ENCODE measurements at regions of chr5 and their contacts with region 1.

Region 1: DNA sequence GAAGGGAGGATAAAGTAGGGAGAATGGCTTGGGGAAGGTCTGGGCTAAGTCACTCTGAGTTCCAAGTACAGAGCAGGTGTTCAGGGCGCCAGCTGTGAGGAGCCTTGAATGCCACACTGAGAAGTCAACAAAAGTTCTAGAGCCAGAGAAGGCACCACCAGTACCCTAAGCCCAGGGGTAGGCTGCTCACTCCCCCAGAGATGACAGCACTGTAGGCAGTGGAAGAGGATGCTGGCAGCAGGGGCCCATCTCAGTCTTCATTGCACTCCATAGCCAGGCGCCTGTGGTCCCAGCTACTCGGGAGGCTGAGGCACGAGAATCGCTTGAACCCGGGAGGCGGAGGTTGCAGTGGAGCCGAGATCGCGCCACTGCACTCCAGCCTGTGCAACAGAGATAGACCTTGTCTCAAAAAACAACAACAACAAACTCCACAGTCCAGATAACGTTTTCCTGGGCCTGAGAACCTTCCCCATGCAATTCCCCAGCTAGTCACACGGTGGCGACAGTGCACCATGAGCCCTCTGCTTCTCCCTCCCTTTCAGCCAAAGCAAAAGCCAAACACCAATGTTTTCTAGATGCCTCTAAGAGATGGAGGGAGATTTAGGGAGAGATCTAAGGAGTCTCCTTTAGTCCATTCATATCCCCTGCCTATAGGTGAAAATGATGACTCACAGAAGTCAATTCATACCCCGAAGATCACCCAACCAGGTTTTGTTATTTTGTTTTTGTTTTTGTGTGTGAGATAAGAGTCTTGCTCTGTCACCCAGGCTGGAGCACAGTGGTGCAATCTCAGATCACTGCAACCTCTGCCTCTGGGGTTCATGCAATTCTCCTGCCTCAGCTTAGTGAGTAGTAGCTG is 19.8 kb upstream of the NSD1 start:
- ATAC-seq: peak; percentile 41 to 70 (median 60)
- H3K4me3 ChIP-seq: no peak overlapping the region
- H3K27ac ChIP-seq: no peak overlapping the region
- H3K4me1 ChIP-seq: no peaks in the 10 kb centered on the region

Region 2: DNA sequence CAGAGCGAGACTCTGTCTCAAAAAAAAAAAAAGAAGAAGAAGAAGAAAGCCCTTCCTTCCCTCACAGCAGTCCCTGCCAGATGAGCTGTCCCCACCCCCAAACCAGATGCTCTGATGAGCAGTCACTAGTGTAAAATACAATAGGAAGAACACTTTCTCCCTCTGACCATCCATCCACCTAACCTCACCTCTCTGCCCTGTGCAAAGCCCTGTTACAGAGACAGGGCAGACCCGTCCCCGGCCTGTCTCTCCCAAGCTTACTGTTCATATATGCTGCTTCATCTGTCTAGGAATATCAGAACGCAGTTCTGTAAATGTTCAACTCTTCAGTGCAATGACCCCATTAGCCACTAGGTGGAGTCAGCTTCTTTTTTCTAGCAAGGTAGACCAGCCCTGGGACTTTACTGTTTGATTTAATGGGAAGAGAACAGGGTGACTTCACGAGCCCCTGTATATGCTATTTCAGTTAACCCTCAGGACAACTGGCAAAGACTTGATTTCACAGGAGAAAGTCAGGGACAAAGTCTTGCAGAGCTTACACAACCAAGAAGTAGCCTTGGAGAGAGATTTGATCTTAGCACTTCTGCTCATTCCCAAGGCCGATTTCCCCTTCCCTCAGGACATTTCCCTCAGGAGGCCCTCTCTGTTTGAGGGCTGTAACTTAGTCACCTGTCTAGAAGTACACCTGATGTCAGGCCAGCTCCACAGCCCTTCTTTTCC is 42.0 kb before region 1 on chr5:
- in situ Hi-C with region 1: loop called in 1 of 9 experiments (anchors 5 kb)
- ATAC-seq: peak; percentile 84 to 98 (median 92)
- H3K4me3 ChIP-seq: no peak overlapping the region
- H3K27ac ChIP-seq: no peak overlapping the region
- H3K4me1 ChIP-seq: peaks cover 0 to 3% of the 10 kb centered on the region in 2 donors

Region 3: DNA sequence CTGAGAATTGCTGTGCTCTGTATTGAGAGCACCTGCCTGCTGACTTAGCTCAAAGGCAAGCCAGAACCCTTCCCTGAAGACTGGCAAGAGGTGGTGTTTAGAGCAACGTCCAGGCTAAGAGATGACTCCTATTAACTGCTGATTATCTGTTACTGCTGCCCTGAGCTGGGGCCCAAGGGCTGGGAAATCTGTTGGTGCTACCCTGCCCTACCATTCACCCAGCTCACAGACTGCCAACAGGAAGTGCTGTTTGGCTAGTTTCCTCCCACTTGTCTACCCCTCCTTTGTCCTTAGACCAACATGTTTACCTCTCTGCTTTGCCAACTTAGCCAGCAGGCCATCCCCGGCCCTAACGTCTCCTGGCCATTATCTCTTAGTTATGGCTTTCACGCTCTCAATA is 182.8 kb after region 1 on chr5:
- in situ Hi-C with region 1: loop called in 1 of 9 experiments (anchors 25 kb)
- ATAC-seq: no peak
- H3K4me3 ChIP-seq: no peak overlapping the region
- H3K27ac ChIP-seq: no peak overlapping the region
- H3K4me1 ChIP-seq: peaks cover 0 to 3% of the 10 kb centered on the region in 2 donors